GM12878 (cell line): ENCODE measurements at regions of chr1 and their contacts with region 1.

Region 1: DNA sequence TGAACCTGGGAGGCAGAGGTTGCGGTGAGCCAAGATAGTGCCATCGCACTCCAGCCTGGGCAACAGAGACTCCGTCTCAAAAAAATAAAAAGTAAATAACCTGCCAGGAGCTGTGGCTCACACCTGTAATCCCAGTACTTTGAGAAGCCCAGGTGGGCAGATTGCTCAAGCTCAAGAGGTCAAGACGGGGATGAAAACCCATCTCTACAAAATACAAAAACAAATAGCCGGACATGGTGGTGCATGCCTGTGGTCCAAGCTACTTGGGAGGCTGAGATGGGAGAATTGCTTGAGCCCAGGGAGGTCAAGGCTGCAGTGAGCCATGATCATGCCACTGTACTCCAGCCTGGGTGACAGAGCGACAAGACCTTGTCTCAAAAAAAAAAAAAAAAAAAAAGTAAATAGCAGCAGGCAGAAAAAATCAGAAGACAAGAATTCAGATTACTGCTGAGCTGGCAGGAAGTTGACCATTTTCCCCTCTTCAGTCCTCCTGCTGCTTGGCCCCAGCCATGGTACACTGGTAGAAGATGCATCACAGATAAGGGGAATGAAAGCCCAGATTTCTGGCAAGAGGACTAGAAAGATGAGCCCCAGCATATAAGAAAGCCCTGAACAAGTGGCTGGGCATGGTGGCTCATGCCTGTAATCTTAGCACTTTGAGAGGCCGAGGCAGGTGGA is 97.6 kb downstream of the TOMM20 start:
- DNase-seq: no peak
- ATAC-seq: no peak
- H3K4me3 ChIP-seq: no peak overlapping the region
- H3K27ac ChIP-seq: no peak overlapping the region
- H3K4me1 ChIP-seq: peaks cover 15% of the 10 kb centered on the region
- H3K27me3 ChIP-seq: no peaks in the 10 kb centered on the region
- CTCF ChIP-seq: no peak
- EP300 ChIP-seq: no peak
- POLR2A ChIP-seq: no peak
- RAD21 ChIP-seq: no peak

Region 2: DNA sequence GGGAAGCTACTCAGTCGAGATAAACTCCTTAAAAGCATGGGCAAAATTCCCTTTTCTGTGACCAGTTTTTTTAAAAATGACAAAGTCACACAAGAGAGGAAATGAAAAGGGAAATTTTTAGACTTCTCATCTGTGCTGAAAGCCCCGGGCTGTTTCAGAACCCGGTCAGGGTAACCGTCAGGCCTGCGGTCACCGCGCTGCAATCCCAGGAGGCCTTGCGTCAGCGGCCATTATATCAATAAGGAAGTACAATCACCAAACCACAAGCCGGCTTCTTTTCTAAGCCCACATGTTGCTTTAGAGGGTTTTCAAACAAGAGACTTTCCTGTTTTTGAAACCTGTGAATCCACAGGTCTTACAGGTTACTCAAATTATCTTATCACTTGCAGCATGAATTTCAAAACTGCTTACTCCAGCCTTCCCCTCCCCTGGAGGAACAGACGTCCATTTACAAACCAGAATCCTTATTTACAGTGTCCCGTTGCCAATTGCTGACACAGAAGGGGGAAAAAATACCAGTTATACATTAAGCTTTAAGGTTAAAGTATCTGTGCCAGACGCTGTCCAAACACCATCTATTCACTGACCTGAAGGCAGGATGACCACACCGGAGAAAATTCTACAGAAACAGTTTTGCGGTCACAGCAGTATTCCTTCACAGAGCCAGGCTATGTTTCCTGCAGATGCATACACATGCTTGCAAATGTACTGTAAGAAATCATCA is 67.7 kb before region 1 on chr1:
- CTCF ChIA-PET with region 1: no interaction called
- POLR2A ChIA-PET with region 1: no interaction called
- RAD21 ChIA-PET with region 1: no interaction called
- SMC1A ChIA-PET with region 1: no interaction called
- in situ Hi-C with region 1: no loop called
- intact Hi-C with region 1: no loop called
- DNase-seq: peak; percentile 97
- ATAC-seq: peak; percentile 79
- H3K4me3 ChIP-seq: peak overlapping the region; percentile 45; the same call in 1 of the 2 replicates
- H3K27ac ChIP-seq: peak overlapping the region; percentile 96
- H3K4me1 ChIP-seq: peaks cover 59% of the 10 kb centered on the region
- H3K27me3 ChIP-seq: no peaks in the 10 kb centered on the region
- CTCF ChIP-seq: no peak
- EP300 ChIP-seq: peak; percentile 95 to 99
- POLR2A ChIP-seq: no peak
- RAD21 ChIP-seq: 0 out of 2 replicates have a peak, but pooled peaks have one; percentile 24

Region 3: GRCh38 chr1:234997201-234997895 is 33.7 kb before region 1 on chr1:
- CTCF ChIA-PET with region 1: no interaction called
- POLR2A ChIA-PET with region 1: no interaction called
- RAD21 ChIA-PET with region 1: no interaction called
- SMC1A ChIA-PET with region 1: no interaction called
- in situ Hi-C with region 1: no loop called
- intact Hi-C with region 1: no loop called
- DNase-seq: no peak
- ATAC-seq: no peak
- H3K4me3 ChIP-seq: no peak overlapping the region
- H3K27ac ChIP-seq: no peak overlapping the region
- H3K4me1 ChIP-seq: no peaks in the 10 kb centered on the region
- H3K27me3 ChIP-seq: no peaks in the 10 kb centered on the region
- CTCF ChIP-seq: no peak
- EP300 ChIP-seq: no peak
- POLR2A ChIP-seq: no peak
- RAD21 ChIP-seq: no peak

Region 4: GRCh38 chr1:235045034-235045720 is 14.1 kb after region 1 on chr1:
- CTCF ChIA-PET with region 1: interaction called, 13 read pairs
- POLR2A ChIA-PET with region 1: interaction called, 11 read pairs
- RAD21 ChIA-PET with region 1: interaction called, 31 read pairs
- SMC1A ChIA-PET with region 1: interaction called, 125 read pairs
- in situ Hi-C with region 1: no loop called
- intact Hi-C with region 1: no loop called
- DNase-seq: no peak
- ATAC-seq: no peak
- H3K4me3 ChIP-seq: no peak overlapping the region
- H3K27ac ChIP-seq: peak overlapping the region; percentile 40; the same call in 1 of the 2 replicates
- H3K4me1 ChIP-seq: peaks cover 42% of the 10 kb centered on the region
- H3K27me3 ChIP-seq: no peaks in the 10 kb centered on the region
- CTCF ChIP-seq: no peak
- EP300 ChIP-seq: no peak
- POLR2A ChIP-seq: no peak
- RAD21 ChIP-seq: no peak